Activated CD4-positive, alpha-beta memory T cell treated with anti-CD3 and anti-CD28 coated beads, Interleukin-2, amount 10 ng/mL, durations not matched to agents 7 days and 5 days (primary cell): ENCODE measurements at regions of chr15 and their contacts with region 1.

Region 1: GRCh38 chr15:65832549-65833364 is 36.5 kb upstream of the RAB11A start:
- DNase-seq: peak; percentile 69
- H3K4me3 Mint-ChIP-seq: peak overlapping the region; percentile 61
- H3K27ac Mint-ChIP-seq: peak overlapping the region; percentile 98
- H3K4me1 Mint-ChIP-seq: peaks cover 56% of the 10 kb centered on the region
- H3K27me3 Mint-ChIP-seq: no peaks in the 10 kb centered on the region

Region 2: DNA sequence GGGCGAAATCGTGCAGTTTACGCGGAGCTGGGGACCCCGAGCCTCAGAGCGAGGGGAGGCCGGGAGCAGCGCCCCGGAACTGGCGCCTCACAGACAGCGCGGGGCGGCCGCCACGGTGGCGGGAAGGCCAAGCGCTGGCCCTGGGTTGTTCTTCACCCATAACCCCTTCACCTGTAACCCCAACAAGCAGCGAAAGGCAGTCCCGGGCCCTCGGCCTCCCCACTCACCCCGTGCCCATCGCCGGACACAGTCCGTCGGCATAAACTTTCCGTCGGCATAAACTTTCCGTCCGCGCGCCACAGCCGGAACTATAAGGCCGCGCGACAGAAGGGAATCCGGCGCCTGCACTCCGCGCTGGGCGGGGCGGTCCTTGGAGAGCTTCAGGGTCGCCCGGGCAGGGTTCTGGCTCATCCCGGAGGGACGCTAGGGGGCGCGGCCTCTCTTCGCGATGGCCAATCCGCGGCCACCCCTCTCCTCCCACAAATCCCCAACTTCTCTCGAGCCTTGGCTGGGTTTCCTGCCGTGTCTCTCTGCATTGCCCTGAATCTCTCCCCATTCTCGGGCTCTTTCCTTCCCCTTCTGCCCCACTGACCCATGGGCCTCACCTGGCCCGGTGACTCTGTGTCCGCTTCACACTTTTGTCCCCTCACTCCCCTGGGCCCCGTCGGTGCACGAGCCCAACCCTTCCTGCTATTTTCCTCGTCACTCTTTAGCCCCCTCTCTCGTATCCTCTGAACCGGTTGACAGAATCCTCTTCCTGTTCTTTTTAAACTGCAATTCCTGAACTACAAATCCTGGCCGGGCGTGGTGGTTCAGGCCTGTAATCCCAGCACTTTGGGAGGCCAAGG is 221.7 kb before region 1 on chr15 and contains the start of gene INTS14:
- CTCF ChIA-PET with region 1: interaction called, 6 read pairs
- POLR2A ChIA-PET with region 1: interaction called, 14 read pairs
- DNase-seq: peak; percentile 94
- H3K4me3 Mint-ChIP-seq: peak within 1 kb of the TSS; percentile 82
- H3K27ac Mint-ChIP-seq: peak within 1 kb of the TSS; percentile 76
- H3K4me1 Mint-ChIP-seq: peaks cover 40% of the 10 kb centered on the region
- H3K27me3 Mint-ChIP-seq: no peaks in the 10 kb centered on the region
- total RNA-seq, gene INTS14: 35.8 to 41.6 TPM

Region 3: GRCh38 chr15:65638681-65639089 is 194.1 kb before region 1 on chr15:
- CTCF ChIA-PET with region 1: interaction called, 63 read pairs
- POLR2A ChIA-PET with region 1: no interaction called
- DNase-seq: peak; percentile 40
- H3K4me3 Mint-ChIP-seq: peak overlapping the region; percentile 38
- H3K27ac Mint-ChIP-seq: no peak overlapping the region
- H3K4me1 Mint-ChIP-seq: peaks cover 17% of the 10 kb centered on the region
- H3K27me3 Mint-ChIP-seq: no peaks in the 10 kb centered on the region

Region 4: GRCh38 chr15:65804252-65804931 is 28.4 kb before region 1 on chr15:
- CTCF ChIA-PET with region 1: interaction called, 6 read pairs
- POLR2A ChIA-PET with region 1: interaction called, 18 read pairs
- DNase-seq: no peak
- H3K4me3 Mint-ChIP-seq: no peak overlapping the region
- H3K27ac Mint-ChIP-seq: peak overlapping the region; percentile 22
- H3K4me1 Mint-ChIP-seq: peaks cover 35% of the 10 kb centered on the region
- H3K27me3 Mint-ChIP-seq: no peaks in the 10 kb centered on the region

Region 5: DNA sequence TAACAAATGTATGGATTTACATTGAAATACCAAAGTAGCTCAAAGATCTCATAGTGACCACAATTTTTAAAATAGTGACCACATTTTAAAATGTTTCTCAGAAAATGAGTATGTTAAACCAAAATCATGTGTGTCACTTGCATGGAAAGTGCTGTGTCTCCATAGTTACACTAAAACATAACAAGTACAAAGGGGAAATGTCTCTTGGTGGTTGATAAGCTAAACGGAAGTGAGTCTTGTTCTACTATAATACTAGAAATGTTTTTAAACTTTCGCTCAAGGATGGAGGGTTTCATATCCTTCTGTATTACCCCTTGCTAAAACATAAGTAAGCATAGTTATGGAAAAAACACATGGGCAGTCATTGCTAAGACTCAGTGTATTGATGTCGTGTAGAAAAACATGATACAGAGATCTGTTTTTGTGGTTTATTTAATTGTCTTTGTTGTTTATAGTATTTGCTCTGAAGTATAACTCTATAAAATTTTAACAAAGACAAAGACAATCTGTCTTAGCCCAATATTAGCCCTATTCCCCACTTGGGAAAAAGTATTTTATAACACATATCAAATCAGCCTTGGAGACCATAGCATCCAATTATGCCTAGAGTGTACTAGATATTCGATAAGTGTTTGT is 13.7 kb before region 1 on chr15:
- CTCF ChIA-PET with region 1: interaction called, 14 read pairs
- POLR2A ChIA-PET with region 1: interaction called, 31 read pairs
- DNase-seq: no peak
- H3K4me3 Mint-ChIP-seq: peak overlapping the region; percentile 31
- H3K27ac Mint-ChIP-seq: peak overlapping the region; percentile 57
- H3K4me1 Mint-ChIP-seq: peaks cover 50% of the 10 kb centered on the region
- H3K27me3 Mint-ChIP-seq: peaks cover 7% of the 10 kb centered on the region